Caco-2 (cell line): ENCODE measurements at regions of chr20 and their contacts with region 1.

Region 1: DNA sequence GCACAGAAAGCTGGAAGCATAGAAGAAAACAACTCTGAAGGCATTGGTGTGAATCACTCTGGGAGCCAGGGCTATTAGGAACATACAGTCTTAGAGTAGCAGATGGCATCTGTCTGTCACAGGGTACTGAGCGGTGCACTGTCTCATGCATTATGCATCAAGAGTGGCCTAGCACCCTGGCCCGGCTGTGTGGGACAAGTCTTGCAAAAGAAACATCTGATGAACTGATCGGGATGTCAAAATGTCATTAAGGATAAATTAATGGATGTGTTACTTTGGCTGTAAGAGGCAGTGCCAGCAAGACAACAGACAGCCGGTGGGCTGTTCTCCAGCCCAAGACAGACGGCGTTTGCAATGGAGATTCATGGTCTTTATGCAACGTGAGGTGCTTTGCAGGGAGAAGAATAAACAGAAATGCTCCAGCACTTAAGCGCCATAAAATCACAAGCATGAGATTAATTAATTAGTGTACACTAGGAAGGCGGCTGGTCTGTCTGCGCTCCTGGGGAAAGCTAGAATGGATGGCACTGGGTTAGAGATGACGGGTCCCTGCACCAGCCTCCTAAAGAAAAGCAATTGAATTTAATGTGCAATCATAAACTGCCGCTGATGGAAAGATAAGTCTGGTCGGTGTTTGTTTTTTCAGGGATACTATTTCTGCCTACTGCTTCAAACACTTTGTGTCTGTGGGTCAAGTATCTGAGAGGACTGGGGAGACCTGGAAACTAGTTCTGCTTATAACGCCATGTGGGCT is 600.6 kb upstream of the CHD6 start:
- DNase-seq: no peak
- H3K4me3 ChIP-seq: no peak overlapping the region
- H3K4me3 Mint-ChIP-seq: no peak overlapping the region
- H3K27ac Mint-ChIP-seq: no peak overlapping the region
- H3K4me1 ChIP-seq: no peaks in the 10 kb centered on the region
- H3K4me1 Mint-ChIP-seq: no peaks in the 10 kb centered on the region
- H3K27me3 ChIP-seq: no peaks in the 10 kb centered on the region
- H3K27me3 Mint-ChIP-seq: peaks cover 21% of the 10 kb centered on the region
- CTCF ChIP-seq: no peak

Region 2: DNA sequence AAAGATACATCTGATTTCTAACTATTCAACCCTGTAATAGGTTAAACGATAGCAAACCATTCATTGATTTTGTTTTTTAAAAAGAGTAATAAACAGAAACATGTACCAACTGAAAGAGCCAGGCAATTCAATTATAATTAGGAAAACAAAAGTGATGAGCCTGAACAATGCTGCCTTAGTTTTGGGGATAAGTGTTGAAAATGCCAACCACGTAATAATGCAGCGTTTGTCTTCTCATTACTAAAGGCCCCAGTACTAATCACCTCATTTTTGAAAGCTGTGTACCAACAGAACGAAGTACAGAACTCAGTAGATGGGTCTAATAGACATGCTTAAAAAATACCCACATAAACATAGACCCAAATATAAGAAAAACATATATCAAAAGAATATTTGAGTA is 63.0 kb after region 1 on chr20:
- CTCF ChIA-PET with region 1: no interaction called
- POLR2A ChIA-PET with region 1: interaction called, 10 read pairs
- intact Hi-C with region 1: no loop called
- DNase-seq: no peak
- H3K4me3 ChIP-seq: no peak overlapping the region
- H3K4me3 Mint-ChIP-seq: no peak overlapping the region
- H3K27ac Mint-ChIP-seq: no peak overlapping the region
- H3K4me1 ChIP-seq: no peaks in the 10 kb centered on the region
- H3K4me1 Mint-ChIP-seq: no peaks in the 10 kb centered on the region
- H3K27me3 ChIP-seq: no peaks in the 10 kb centered on the region; the same call in 1 of the 2 replicates
- H3K27me3 Mint-ChIP-seq: peaks cover 10% of the 10 kb centered on the region
- CTCF ChIP-seq: no peak